Thyroid gland (tissue), 4 donors: ENCODE measurements at regions of chr2 and their contacts with region 1.

Region 1: DNA sequence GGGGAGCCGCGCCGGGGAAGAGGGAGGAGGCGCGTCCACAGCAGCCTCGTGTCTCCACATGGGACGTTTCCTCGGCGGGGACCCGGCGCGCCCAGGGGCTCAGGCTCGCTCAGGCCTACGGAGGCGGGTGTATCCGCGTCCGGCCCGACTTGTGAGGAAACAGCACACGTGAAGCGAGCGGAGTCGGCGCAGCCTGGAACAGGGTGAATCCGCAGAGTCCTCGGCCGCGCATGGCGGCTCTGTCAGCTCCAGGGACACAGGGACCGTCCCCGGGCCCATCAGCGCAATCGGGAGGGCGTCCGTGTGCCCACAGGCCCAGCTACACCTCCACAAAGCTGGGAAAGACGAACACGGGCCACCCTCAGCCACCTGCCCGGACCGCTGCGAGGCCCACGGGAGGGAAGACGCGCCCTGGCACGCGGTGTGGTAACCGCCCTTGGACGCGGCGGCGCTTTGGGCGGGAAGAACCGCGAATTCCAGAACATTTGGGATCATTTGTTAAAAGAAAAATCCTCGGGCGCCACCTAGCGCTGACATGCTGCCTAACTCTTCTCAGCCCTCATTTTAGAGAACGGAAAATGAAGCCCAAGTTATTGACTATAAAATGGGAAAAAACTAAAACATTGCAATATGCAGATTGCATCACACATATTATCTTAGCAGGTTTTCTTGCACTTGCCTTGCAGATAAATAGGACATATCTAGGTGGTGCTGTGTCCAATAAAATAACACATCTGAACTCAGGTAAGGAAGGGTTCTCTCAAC is 40.4 kb downstream of the TMEM18 start:
- DNase-seq: peak; percentile 75 to 81
- H3K4me3 ChIP-seq: peak overlapping the region in 1 of 3 donors; percentile 6
- H3K27ac ChIP-seq: peak overlapping the region in 1 of 3 donors; percentile 81
- H3K4me1 ChIP-seq: peaks cover 16 to 41% of the 10 kb centered on the region in 2 donors
- H3K27me3 ChIP-seq: no peaks in the 10 kb centered on the region
- CTCF ChIP-seq: peak; percentile 59 to 89 (median 86)
- POLR2A ChIP-seq: no peak

Region 2: GRCh38 chr2:264660-265468 is 372.0 kb before region 1 on chr2 and contains the start of gene ACP1:
- intact Hi-C with region 1: loop called (anchors 10 kb)
- DNase-seq: peak; percentile 99 to 100
- H3K4me3 ChIP-seq: peak within 1 kb of the TSS; percentile 64 to 71 (median 70)
- H3K27ac ChIP-seq: peak within 1 kb of the TSS; percentile 71 to 89 (median 81)
- H3K4me1 ChIP-seq: peaks cover 15 to 22% of the 10 kb centered on the region in 2 donors
- H3K27me3 ChIP-seq: no peaks in the 10 kb centered on the region
- CTCF ChIP-seq: peak in 1 of 6 experiments; percentile 4
- POLR2A ChIP-seq: peak; percentile 64 to 90
- total RNA-seq, gene ACP1: 117 to 136 (median 128) TPM

Region 3: DNA sequence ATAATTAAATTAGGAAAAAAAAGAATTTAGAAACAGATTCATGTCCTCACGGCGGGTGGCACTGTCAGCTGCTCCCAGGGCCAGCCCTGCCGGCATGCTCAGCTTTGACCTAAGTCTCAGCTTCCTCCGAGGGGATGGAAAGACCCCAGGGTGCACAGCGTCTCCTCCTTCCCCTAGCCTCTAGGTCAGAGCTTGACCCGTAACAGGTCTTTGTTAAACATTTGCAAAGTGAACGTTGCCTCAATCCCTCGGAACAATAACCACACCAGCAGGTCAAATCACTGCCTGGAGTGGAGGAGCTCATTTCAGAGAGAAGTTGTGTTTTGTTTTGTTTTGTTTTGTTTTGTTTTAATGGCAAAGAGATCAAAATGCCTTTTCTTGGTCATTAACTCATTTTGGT is 130.9 kb before region 1 on chr2:
- intact Hi-C with region 1: no loop called
- DNase-seq: no peak
- H3K4me3 ChIP-seq: no peak overlapping the region
- H3K27ac ChIP-seq: no peak overlapping the region
- H3K4me1 ChIP-seq: no peaks in the 10 kb centered on the region
- H3K27me3 ChIP-seq: no peaks in the 10 kb centered on the region
- CTCF ChIP-seq: no peak
- POLR2A ChIP-seq: no peak

Region 4: GRCh38 chr2:529425-529824 is 107.4 kb before region 1 on chr2:
- intact Hi-C with region 1: loop called (anchors 5 kb)
- DNase-seq: no peak
- H3K4me3 ChIP-seq: no peak overlapping the region
- H3K27ac ChIP-seq: no peak overlapping the region
- H3K4me1 ChIP-seq: peaks cover 0 to 3% of the 10 kb centered on the region in 2 donors
- H3K27me3 ChIP-seq: no peaks in the 10 kb centered on the region
- CTCF ChIP-seq: peak in 4 of 6 experiments; percentile 53 to 81 (median 58)
- POLR2A ChIP-seq: no peak

Region 5: DNA sequence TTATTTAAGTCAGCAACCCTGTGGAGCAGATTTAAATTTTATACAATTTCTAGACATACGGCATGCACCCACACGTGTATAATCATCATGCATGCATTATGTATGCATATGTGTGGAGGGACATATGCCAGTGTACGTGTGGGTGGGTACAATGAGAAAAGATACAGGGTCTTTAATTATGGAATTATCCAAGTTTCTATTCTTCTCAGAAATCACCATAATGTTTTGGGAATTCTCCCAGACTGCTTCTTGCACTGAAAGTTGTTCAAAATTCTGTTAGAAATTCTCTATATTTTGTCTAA is 104.3 kb after region 1 on chr2:
- intact Hi-C with region 1: no loop called
- DNase-seq: no peak
- H3K4me3 ChIP-seq: no peak overlapping the region
- H3K27ac ChIP-seq: no peak overlapping the region
- H3K4me1 ChIP-seq: peaks cover 4 to 10% of the 10 kb centered on the region in 2 donors
- H3K27me3 ChIP-seq: no peaks in the 10 kb centered on the region
- CTCF ChIP-seq: no peak
- POLR2A ChIP-seq: no peak